Activated CD4-positive, alpha-beta memory T cell treated with anti-CD3 and anti-CD28 coated beads for 36 hours (primary cell): ENCODE measurements at regions of chr12 and their contacts with region 1.

Region 1: GRCh38 chr12:50986966-50987737 is 34.8 kb downstream of the HIGD1C start:
- DNase-seq: peak; percentile 34
- H3K4me3 Mint-ChIP-seq: no peak overlapping the region
- H3K27ac Mint-ChIP-seq: no peak overlapping the region
- H3K4me1 Mint-ChIP-seq: peaks cover 51% of the 10 kb centered on the region
- H3K27me3 Mint-ChIP-seq: no peaks in the 10 kb centered on the region

Region 2: DNA sequence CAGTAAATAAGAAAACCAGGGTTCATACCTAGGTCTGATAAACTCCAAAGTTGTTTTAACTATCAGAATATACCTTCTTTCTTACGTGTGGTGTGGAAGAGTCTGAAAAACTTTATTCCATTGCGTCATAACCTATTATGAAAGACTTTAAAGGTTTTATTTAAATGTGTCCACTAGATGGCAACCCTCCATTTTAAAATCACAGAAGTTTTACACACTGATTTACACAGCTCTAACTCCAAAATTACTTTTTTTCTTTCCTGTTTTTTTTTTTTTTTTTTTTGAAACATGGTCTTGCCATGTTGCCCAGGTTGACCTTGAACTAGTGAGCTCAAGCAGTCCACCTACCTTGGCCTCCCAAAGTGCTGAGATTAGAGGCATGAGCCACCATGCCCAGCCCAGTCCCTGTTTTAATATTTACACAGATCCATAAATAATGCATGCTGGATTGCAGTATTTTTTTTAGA is 161.7 kb before region 1 on chr12:
- CTCF ChIA-PET with region 1: interaction called, 33 read pairs
- POLR2A ChIA-PET with region 1: no interaction called
- intact Hi-C with region 1: loop called (anchors 1 kb)
- DNase-seq: no peak
- H3K4me3 Mint-ChIP-seq: no peak overlapping the region
- H3K27ac Mint-ChIP-seq: no peak overlapping the region
- H3K4me1 Mint-ChIP-seq: peaks cover 5% of the 10 kb centered on the region
- H3K27me3 Mint-ChIP-seq: no peaks in the 10 kb centered on the region

Region 3: GRCh38 chr12:51320695-51321320 is 333.7 kb after region 1 on chr12:
- CTCF ChIA-PET with region 1: no interaction called
- POLR2A ChIA-PET with region 1: no interaction called
- intact Hi-C with region 1: no loop called
- DNase-seq: peak; percentile 32
- H3K4me3 Mint-ChIP-seq: peak overlapping the region; percentile 73
- H3K27ac Mint-ChIP-seq: peak overlapping the region; percentile 99
- H3K4me1 Mint-ChIP-seq: peaks cover 71% of the 10 kb centered on the region
- H3K27me3 Mint-ChIP-seq: no peaks in the 10 kb centered on the region